CD4-positive, alpha-beta memory T cell (primary cell): ENCODE measurements at regions of chr7 and their contacts with region 1.

Region 1: GRCh38 chr7:26667500-26668133 is 196.8 kb downstream of the SKAP2 start:
- DNase-seq: peak; percentile 58 to 67 (median 59)
- H3K4me3 ChIP-seq: no peak overlapping the region
- H3K4me3 Mint-ChIP-seq: no peak overlapping the region
- H3K27ac ChIP-seq: no peak overlapping the region
- H3K27ac Mint-ChIP-seq: no peak overlapping the region
- H3K4me1 ChIP-seq: peaks cover 16% of the 10 kb centered on the region
- H3K4me1 Mint-ChIP-seq: peaks cover 9 to 19% (median 13%) of the 10 kb centered on the region in 4 donors
- H3K27me3 ChIP-seq: no peaks in the 10 kb centered on the region
- H3K27me3 Mint-ChIP-seq: peaks cover 2 to 3% of the 10 kb centered on the region in 2 donors

Region 2: DNA sequence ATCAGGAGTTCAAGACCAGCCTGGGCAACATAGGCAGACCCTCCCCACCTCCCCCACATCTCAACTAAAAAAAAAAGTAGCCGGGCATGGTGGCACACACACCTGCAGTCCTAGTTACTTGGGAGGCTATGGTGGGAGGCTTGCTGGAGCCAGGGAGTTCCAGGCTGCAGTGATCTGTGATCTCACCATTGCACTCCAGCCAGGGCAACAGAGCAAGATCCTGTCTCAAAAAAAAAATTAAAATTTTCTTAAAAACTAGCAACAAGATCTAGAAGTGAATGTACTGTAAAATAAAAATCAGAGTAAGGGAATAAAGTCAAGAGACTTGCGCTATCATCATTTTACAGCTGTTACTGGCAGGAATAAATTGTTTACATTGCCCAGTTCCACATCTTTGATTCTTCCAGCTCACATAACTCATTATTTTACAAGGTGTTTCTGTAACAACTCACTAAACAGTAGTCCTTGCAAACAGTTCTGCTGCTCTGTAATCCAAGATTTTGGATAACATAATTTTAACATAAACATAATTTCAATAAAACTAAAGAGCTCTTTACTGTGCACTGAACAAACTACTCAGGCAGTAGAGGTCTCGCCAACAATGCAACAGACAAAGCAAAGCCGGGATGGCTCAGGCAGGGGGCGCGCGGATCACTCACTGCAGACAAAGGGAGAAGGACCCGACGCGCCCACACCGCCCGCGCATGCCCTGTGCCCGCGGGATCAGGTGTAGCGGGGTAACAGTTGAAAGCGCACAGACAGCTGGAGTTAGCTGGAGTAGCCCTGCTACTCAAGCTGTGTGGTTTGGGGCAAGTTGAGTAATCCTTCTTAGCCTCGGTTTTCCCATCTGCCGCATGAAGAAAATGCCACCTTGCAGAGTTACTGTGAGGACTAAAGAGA is 588.9 kb before region 1 on chr7:
- CTCF ChIA-PET with region 1: no interaction called
- POLR2A ChIA-PET with region 1: no interaction called
- intact Hi-C with region 1: loop called (anchors 5 kb)
- DNase-seq: peak; percentile 73 to 82 (median 75)
- H3K4me3 ChIP-seq: no peak overlapping the region
- H3K4me3 Mint-ChIP-seq: peak overlapping the region in 5 of 8 donors; percentile 21 to 65 (median 46)
- H3K27ac ChIP-seq: no peak overlapping the region
- H3K27ac Mint-ChIP-seq: no peak overlapping the region
- H3K4me1 ChIP-seq: peaks cover 8% of the 10 kb centered on the region
- H3K4me1 Mint-ChIP-seq: peaks cover 0 to 10% (median under 1%) of the 10 kb centered on the region in 4 donors
- H3K27me3 ChIP-seq: peaks cover 15% of the 10 kb centered on the region
- H3K27me3 Mint-ChIP-seq: peaks cover 20 to 46% of the 10 kb centered on the region in 2 donors

Region 3: DNA sequence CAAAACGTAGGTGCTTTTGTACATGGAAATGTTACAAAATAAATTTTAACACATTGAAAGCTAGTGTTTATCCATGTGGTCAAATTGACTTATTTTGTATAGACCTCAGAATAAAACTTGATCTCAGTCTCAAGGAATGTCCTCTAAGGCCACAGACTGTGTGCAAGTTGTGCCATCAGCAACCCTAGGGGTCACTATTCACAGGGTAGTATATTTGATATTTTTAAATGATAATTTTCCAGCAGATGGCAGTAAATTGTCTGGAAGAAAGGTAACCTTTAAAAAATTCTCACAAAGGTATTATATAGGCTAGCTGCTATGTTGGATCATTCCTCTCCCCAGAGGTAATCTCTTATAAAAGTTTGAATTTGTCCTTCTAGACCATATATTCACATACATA is 388.8 kb before region 1 on chr7:
- CTCF ChIA-PET with region 1: no interaction called
- POLR2A ChIA-PET with region 1: no interaction called
- intact Hi-C with region 1: loop called (anchors 2 kb)
- DNase-seq: peak in 4 of 5 donors; percentile 14 to 33 (median 26)
- H3K4me3 ChIP-seq: no peak overlapping the region
- H3K4me3 Mint-ChIP-seq: peak overlapping the region in 1 of 8 donors; percentile 25
- H3K27ac ChIP-seq: no peak overlapping the region
- H3K27ac Mint-ChIP-seq: no peak overlapping the region
- H3K4me1 ChIP-seq: peaks cover 5% of the 10 kb centered on the region
- H3K4me1 Mint-ChIP-seq: peaks cover 8 to 19% (median 12%) of the 10 kb centered on the region in 4 donors
- H3K27me3 ChIP-seq: no peaks in the 10 kb centered on the region
- H3K27me3 Mint-ChIP-seq: no peaks in the 10 kb centered on the region

Region 4: GRCh38 chr7:26376175-26376917 is 291.3 kb before region 1 on chr7:
- CTCF ChIA-PET with region 1: interaction called, 99 read pairs
- POLR2A ChIA-PET with region 1: no interaction called
- intact Hi-C with region 1: loop called (anchors 1 kb)
- DNase-seq: peak; percentile 22 to 43 (median 24)
- H3K4me3 ChIP-seq: peak overlapping the region; percentile 26 to 56
- H3K4me3 Mint-ChIP-seq: peak overlapping the region; percentile 83 to 95 (median 88)
- H3K27ac ChIP-seq: no peak overlapping the region
- H3K27ac Mint-ChIP-seq: peak overlapping the region in 2 of 7 donors; percentile 24 to 75
- H3K4me1 ChIP-seq: peaks cover 8% of the 10 kb centered on the region
- H3K4me1 Mint-ChIP-seq: peaks cover 0 to 7% (median 5%) of the 10 kb centered on the region in 4 donors
- H3K27me3 ChIP-seq: peaks cover 11% of the 10 kb centered on the region
- H3K27me3 Mint-ChIP-seq: peaks cover 13 to 23% of the 10 kb centered on the region in 2 donors

Region 5: GRCh38 chr7:26500749-26501352 is 166.8 kb before region 1 on chr7:
- CTCF ChIA-PET with region 1: no interaction called
- POLR2A ChIA-PET with region 1: no interaction called
- intact Hi-C with region 1: loop called (anchors 2 kb)
- DNase-seq: peak in 3 of 5 donors; percentile 3 to 9 (median 8)
- H3K4me3 ChIP-seq: no peak overlapping the region
- H3K4me3 Mint-ChIP-seq: no peak overlapping the region
- H3K27ac ChIP-seq: no peak overlapping the region
- H3K27ac Mint-ChIP-seq: no peak overlapping the region
- H3K4me1 ChIP-seq: no peaks in the 10 kb centered on the region
- H3K4me1 Mint-ChIP-seq: no peaks in the 10 kb centered on the region
- H3K27me3 ChIP-seq: no peaks in the 10 kb centered on the region
- H3K27me3 Mint-ChIP-seq: peaks cover 8 to 16% of the 10 kb centered on the region in 2 donors

Region 6: GRCh38 chr7:26686448-26686981 is 18.9 kb after region 1 on chr7:
- CTCF ChIA-PET with region 1: interaction called, 43 read pairs
- POLR2A ChIA-PET with region 1: no interaction called
- intact Hi-C with region 1: no loop called
- DNase-seq: peak in 4 of 5 donors; percentile 28 to 43 (median 34)
- H3K4me3 ChIP-seq: no peak overlapping the region
- H3K4me3 Mint-ChIP-seq: no peak overlapping the region
- H3K27ac ChIP-seq: no peak overlapping the region
- H3K27ac Mint-ChIP-seq: no peak overlapping the region
- H3K4me1 ChIP-seq: no peaks in the 10 kb centered on the region
- H3K4me1 Mint-ChIP-seq: peaks cover 0 to under 1% (median 0%) of the 10 kb centered on the region in 4 donors
- H3K27me3 ChIP-seq: no peaks in the 10 kb centered on the region
- H3K27me3 Mint-ChIP-seq: peaks cover 10 to 11% of the 10 kb centered on the region in 2 donors

Region 7: DNA sequence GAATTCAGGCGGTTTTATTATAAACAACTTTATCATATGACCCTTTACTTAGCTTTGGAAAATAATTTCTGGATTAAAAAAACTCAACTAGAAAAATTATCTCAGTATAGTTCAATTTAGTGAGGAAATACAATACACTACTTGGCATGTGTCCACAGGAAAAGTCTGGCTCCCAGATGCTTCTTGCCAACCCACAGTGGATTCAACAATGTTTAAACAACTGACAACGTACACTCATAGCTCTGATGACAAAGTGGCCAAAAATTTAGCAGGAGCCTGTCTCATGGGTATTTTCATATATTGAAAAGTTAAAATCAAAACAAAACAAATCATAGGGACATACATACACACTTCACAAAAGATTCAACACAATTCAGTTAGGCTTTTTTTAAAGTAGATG is 38.0 kb after region 1 on chr7:
- CTCF ChIA-PET with region 1: no interaction called
- POLR2A ChIA-PET with region 1: no interaction called
- intact Hi-C with region 1: no loop called
- DNase-seq: no peak
- H3K4me3 ChIP-seq: no peak overlapping the region
- H3K4me3 Mint-ChIP-seq: no peak overlapping the region
- H3K27ac ChIP-seq: no peak overlapping the region
- H3K27ac Mint-ChIP-seq: no peak overlapping the region
- H3K4me1 ChIP-seq: no peaks in the 10 kb centered on the region
- H3K4me1 Mint-ChIP-seq: no peaks in the 10 kb centered on the region
- H3K27me3 ChIP-seq: no peaks in the 10 kb centered on the region
- H3K27me3 Mint-ChIP-seq: peaks cover 0 to 11% of the 10 kb centered on the region in 2 donors